MCF 10A (cell line): ENCODE measurements at regions of chr20 and their contacts with region 1.

Region 1: DNA sequence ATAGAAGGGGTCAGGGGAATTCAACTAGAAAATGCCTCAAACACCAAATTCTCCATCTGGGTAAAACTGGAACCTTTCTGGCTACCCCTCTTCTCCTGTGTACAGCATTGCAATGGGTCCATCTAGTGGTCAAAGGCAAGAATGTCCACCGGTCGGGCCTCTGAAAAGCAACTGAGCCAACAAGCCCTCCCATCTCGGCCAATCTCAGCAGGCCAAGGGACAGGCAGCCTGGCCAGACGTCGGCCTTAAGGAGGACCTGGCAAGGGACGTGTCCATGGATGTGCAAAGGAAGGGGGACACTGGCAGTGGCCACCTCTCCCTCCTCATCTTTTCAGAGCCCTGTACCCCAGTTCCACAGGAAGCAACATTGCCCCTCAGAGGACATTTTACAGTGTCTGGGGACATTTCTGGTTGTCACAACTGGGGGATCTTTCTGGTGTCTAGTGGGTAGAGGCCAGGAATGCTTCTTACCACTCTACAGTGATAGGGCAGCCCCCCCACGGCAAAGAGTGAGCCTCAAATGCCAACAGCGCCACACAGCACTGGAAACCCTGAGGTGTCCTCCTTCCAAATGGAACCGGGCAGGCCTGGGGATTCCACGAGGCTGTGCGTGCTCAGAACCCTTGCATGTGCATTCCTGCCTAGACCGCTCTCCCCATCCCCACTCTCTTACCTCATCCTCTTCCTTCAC is 99.8 kb upstream of the FOXA2 start:
- DNase-seq: peak; percentile 82
- H3K4me3 Mint-ChIP-seq: no peak overlapping the region
- H3K27ac Mint-ChIP-seq: no peak overlapping the region
- H3K4me1 Mint-ChIP-seq: peaks cover 29% of the 10 kb centered on the region
- H3K27me3 Mint-ChIP-seq: no peaks in the 10 kb centered on the region
- CTCF ChIP-seq: peak; percentile 87

Region 2: GRCh38 chr20:21719592-21720214 is 964.5 kb before region 1 on chr20:
- CTCF ChIA-PET with region 1: interaction called, 3 read pairs
- POLR2A ChIA-PET with region 1: no interaction called
- intact Hi-C with region 1: loop called (anchors 10 kb)
- DNase-seq: peak; percentile 69
- H3K4me3 Mint-ChIP-seq: no peak overlapping the region
- H3K27ac Mint-ChIP-seq: no peak overlapping the region
- H3K4me1 Mint-ChIP-seq: no peaks in the 10 kb centered on the region
- H3K27me3 Mint-ChIP-seq: peaks cover 40% of the 10 kb centered on the region
- CTCF ChIP-seq: peak; percentile 57

Region 3: DNA sequence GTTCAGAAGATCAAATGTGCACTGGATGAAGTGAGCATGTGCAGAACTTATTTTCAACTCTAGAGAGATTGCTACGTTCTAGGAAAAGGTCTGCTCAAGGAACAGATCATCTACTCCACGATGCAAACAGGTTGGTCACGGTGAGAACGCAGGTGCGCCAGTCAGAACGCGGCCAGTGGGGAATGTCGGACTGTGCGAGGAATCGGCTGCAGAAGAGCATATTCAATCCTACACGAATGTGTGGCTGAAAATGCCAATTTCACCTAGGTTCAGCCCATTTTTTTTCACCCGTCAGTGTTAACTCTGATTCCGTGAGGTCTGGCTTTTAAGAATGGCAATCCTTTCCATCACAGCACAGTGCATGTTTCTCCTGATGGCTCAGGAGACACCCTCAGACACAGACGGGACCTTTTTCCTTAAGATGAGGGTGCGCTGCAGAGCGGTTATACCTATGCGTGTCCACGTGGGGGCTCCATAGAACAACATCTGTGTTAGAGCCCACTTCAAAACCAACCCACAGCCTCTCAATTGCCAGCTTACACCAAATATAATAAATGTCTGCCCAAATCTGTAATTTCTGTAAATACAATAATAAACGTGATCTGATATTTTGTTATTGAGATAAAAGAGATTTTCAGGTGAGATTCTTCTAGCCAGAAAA is 350.2 kb before region 1 on chr20:
- CTCF ChIA-PET with region 1: interaction called, 549 read pairs
- POLR2A ChIA-PET with region 1: interaction called, 31 read pairs
- intact Hi-C with region 1: loop called (anchors 1 kb)
- DNase-seq: peak; percentile 66
- H3K4me3 Mint-ChIP-seq: no peak overlapping the region
- H3K27ac Mint-ChIP-seq: no peak overlapping the region
- H3K4me1 Mint-ChIP-seq: peaks cover 10% of the 10 kb centered on the region
- H3K27me3 Mint-ChIP-seq: peaks cover 27% of the 10 kb centered on the region
- CTCF ChIP-seq: peak; percentile 78

Region 4: GRCh38 chr20:22379472-22379871 is 304.7 kb before region 1 on chr20:
- CTCF ChIA-PET with region 1: interaction called, 15 read pairs
- POLR2A ChIA-PET with region 1: interaction called, 3 read pairs
- intact Hi-C with region 1: no loop called
- DNase-seq: peak; percentile 99
- H3K4me3 Mint-ChIP-seq: no peak overlapping the region
- H3K27ac Mint-ChIP-seq: peak overlapping the region; percentile 75
- H3K4me1 Mint-ChIP-seq: peaks cover 77% of the 10 kb centered on the region
- H3K27me3 Mint-ChIP-seq: no peaks in the 10 kb centered on the region
- CTCF ChIP-seq: no peak

Region 5: GRCh38 chr20:22394583-22394982 is 289.6 kb before region 1 on chr20:
- CTCF ChIA-PET with region 1: interaction called, 25 read pairs
- POLR2A ChIA-PET with region 1: interaction called, 5 read pairs
- intact Hi-C with region 1: no loop called
- DNase-seq: no peak
- H3K4me3 Mint-ChIP-seq: no peak overlapping the region
- H3K27ac Mint-ChIP-seq: no peak overlapping the region
- H3K4me1 Mint-ChIP-seq: peaks cover 20% of the 10 kb centered on the region
- H3K27me3 Mint-ChIP-seq: no peaks in the 10 kb centered on the region
- CTCF ChIP-seq: no peak

Region 6: DNA sequence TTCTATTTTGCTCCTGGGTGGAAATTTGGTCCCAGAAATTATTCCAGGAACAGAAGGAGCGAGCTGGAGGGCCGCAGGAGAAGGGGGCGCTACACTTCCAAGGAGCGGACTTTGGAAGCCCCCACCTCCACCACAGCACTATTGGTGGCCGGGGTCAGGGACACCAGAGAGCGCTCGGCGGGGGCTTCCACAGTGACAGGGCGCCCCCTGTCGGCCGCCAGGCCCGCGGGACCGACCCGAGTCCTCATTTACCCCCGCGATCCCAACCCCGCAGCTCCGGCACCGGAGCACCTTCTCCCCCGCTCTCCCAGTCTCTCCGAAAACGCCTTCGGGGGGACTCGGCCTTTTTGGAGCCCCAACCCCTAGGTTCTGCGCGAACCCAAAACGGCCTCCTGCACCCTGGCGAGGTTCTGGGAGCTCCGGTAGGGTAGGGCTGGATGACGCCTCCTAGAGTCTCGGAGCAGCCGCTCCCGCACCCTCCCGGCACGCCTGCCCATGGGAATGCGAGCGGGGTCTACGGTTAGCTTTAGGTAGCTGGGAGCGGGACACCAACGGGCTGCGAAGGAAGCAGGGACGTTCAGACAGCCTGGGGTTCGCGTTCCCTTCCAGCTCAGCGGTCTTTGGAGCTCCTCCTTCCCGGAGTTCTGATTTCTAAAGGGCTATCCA is 97.4 kb before region 1 on chr20:
- CTCF ChIA-PET with region 1: interaction called, 11 read pairs
- POLR2A ChIA-PET with region 1: no interaction called
- intact Hi-C with region 1: loop called (anchors 2 kb)
- DNase-seq: peak; percentile 36
- H3K4me3 Mint-ChIP-seq: no peak overlapping the region
- H3K27ac Mint-ChIP-seq: no peak overlapping the region
- H3K4me1 Mint-ChIP-seq: no peaks in the 10 kb centered on the region
- H3K27me3 Mint-ChIP-seq: peaks cover 18% of the 10 kb centered on the region
- CTCF ChIP-seq: peak; percentile 83

Region 7: GRCh38 chr20:23291575-23292240 is 607.5 kb after region 1 on chr20:
- CTCF ChIA-PET with region 1: no interaction called
- POLR2A ChIA-PET with region 1: no interaction called
- intact Hi-C with region 1: no loop called
- DNase-seq: no peak
- H3K4me3 Mint-ChIP-seq: no peak overlapping the region
- H3K27ac Mint-ChIP-seq: no peak overlapping the region
- H3K4me1 Mint-ChIP-seq: no peaks in the 10 kb centered on the region
- H3K27me3 Mint-ChIP-seq: peaks cover 17% of the 10 kb centered on the region
- CTCF ChIP-seq: no peak

Region 8: GRCh38 chr20:24100385-24101011 is 1416.3 kb after region 1 on chr20:
- CTCF ChIA-PET with region 1: no interaction called
- POLR2A ChIA-PET with region 1: no interaction called
- intact Hi-C with region 1: no loop called
- DNase-seq: peak; percentile 28
- H3K4me3 Mint-ChIP-seq: no peak overlapping the region
- H3K27ac Mint-ChIP-seq: no peak overlapping the region
- H3K4me1 Mint-ChIP-seq: no peaks in the 10 kb centered on the region
- H3K27me3 Mint-ChIP-seq: no peaks in the 10 kb centered on the region
- CTCF ChIP-seq: no peak